HEK293 (cell line): ENCODE measurements at regions of chr10 and their contacts with region 1.

Region 1: GRCh38 chr10:117249493-117250093 is 8.7 kb downstream of the SLC18A2 start:
- H3K4me3 ChIP-seq: no peak overlapping the region
- H3K27ac ChIP-seq: no peak overlapping the region
- H3K4me1 ChIP-seq: no peaks in the 10 kb centered on the region
- CTCF ChIP-seq: no peak

Region 2: GRCh38 chr10:117261501-117261900 is 11.9 kb after region 1 on chr10:
- CTCF ChIA-PET with region 1: interaction called, 4 read pairs
- POLR2A ChIA-PET with region 1: interaction called, 12 read pairs
- H3K4me3 ChIP-seq: no peak overlapping the region
- H3K27ac ChIP-seq: no peak overlapping the region
- H3K4me1 ChIP-seq: no peaks in the 10 kb centered on the region
- CTCF ChIP-seq: no peak

Region 3: GRCh38 chr10:117320050-117320665 is 70.6 kb after region 1 on chr10:
- CTCF ChIA-PET with region 1: interaction called, 10 read pairs
- POLR2A ChIA-PET with region 1: no interaction called
- H3K4me3 ChIP-seq: no peak overlapping the region
- H3K27ac ChIP-seq: no peak overlapping the region
- H3K4me1 ChIP-seq: peaks cover 9% of the 10 kb centered on the region
- CTCF ChIP-seq: peak; percentile 34; the same call in 1 of the 2 replicates